ENCODE measurements at regions of chr16 and their contacts with region 1.

Region 1: GRCh38 chr16:3023669-3024478 is at the starts of genes HCFC1R1 and THOC6:
- DNase-seq: peak; percentile 97
- H3K4me3 Mint-ChIP-seq: peak within 1 kb of the TSS; percentile 73
- H3K27ac Mint-ChIP-seq: peak within 1 kb of the TSS; percentile 83
- H3K4me1 Mint-ChIP-seq: peaks cover 58% of the 10 kb centered on the region
- H3K27me3 Mint-ChIP-seq: peaks cover 5% of the 10 kb centered on the region
- total RNA-seq, gene HCFC1R1: 37.0 to 43.3 TPM
- total RNA-seq, gene THOC6: 42.4 TPM

Region 2: DNA sequence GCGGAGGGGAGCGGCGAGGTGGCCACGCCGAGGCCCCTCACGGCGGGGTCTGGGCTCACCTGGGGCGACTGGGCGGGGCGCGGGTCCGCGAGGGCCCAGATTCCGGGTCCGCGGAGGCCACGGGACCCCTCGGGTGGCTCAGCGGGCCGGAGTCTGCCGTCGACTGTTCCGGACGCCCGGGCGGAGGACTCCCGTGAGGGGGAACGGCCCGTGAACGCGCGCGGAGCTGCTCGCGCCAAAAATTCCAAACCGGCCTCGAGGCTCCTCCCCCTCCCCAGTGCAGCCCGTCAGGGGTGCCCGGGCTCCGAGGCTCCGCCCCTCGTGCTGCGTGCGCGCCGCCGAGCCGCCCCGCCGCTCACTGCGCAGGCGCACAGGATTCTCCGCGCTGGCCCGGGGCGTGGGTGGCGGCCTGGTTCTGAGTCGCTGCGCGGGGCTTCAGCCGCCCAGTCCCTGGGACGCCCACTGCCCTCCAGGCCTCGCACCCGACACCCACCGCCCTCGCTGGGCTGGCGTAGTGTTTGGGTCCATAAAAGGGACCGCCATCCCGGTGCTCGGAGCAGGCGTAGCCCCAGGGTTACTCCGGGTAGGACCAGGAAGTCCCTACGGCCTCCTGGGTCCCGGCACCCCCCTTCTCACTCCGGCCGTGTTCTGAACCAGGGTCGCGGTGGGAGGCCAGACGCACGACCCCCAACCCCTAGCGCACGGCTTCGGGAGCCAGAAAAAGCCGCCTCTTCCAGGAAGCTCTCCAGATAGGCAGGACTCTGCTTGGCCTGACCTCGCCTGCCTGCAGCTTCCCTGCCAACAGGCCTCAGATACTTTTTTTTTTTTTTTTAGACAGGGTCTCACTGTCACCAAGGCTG is 43.4 kb before region 1 on chr16 and contains the start of gene PKMYT1:
- CTCF ChIA-PET with region 1: interaction called, 6 read pairs
- POLR2A ChIA-PET with region 1: interaction called, 20 read pairs
- DNase-seq: peak; percentile 95
- H3K4me3 Mint-ChIP-seq: peak within 1 kb of the TSS; percentile 88
- H3K27ac Mint-ChIP-seq: peak within 1 kb of the TSS; percentile 80
- H3K4me1 Mint-ChIP-seq: peaks cover 41% of the 10 kb centered on the region
- H3K27me3 Mint-ChIP-seq: peaks cover 2% of the 10 kb centered on the region
- total RNA-seq, gene PKMYT1: 118 to 124 TPM

Region 3: GRCh38 chr16:3038256-3038655 is 14.4 kb after region 1 on chr16:
- CTCF ChIA-PET with region 1: interaction called, 97 read pairs
- POLR2A ChIA-PET with region 1: interaction called, 58 read pairs
- DNase-seq: no peak
- H3K4me3 Mint-ChIP-seq: no peak overlapping the region
- H3K27ac Mint-ChIP-seq: no peak overlapping the region
- H3K4me1 Mint-ChIP-seq: peaks cover 15% of the 10 kb centered on the region
- H3K27me3 Mint-ChIP-seq: peaks cover 54% of the 10 kb centered on the region

Region 4: DNA sequence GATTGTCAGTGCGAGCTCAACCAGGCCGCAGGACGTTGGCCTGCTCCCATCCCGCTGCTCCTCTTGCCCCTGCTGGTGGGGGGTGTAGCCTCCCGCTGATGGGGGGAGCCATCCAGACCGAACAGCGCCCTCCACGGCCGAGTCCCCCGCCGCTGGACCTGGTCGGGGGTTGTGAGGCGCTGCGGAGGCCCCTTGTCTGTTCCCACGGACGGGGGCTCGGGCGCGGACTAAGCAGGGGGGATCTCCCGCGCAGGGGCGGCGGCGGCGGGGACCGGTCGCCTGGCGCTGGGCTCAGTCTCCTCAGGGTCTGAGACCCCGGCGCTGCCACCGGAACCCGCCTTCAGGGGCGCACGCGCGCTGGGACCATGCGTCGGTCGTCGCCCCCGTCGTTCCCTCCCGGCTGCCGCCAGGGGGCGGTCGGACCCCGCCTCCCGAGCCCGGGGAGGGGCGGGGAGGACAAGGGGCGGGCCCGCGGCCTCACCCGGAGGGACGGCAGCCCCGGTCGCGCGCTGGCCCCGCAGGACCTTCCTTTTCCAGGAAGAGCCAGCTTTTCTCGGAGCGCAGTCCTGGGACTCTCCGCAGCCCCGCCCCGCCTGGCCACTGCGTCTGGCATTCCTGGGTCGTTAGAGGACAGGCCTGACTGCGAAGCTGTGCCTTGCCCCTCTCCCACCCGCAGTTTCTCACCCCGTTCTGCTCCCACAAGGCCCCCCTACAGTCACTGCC is 35.3 kb after region 1 on chr16:
- CTCF ChIA-PET with region 1: interaction called, 21 read pairs
- POLR2A ChIA-PET with region 1: interaction called, 8 read pairs
- DNase-seq: peak; percentile 90
- H3K4me3 Mint-ChIP-seq: peak overlapping the region; percentile 79
- H3K27ac Mint-ChIP-seq: peak overlapping the region; percentile 95
- H3K4me1 Mint-ChIP-seq: peaks cover 74% of the 10 kb centered on the region
- H3K27me3 Mint-ChIP-seq: no peaks in the 10 kb centered on the region

Region 5: DNA sequence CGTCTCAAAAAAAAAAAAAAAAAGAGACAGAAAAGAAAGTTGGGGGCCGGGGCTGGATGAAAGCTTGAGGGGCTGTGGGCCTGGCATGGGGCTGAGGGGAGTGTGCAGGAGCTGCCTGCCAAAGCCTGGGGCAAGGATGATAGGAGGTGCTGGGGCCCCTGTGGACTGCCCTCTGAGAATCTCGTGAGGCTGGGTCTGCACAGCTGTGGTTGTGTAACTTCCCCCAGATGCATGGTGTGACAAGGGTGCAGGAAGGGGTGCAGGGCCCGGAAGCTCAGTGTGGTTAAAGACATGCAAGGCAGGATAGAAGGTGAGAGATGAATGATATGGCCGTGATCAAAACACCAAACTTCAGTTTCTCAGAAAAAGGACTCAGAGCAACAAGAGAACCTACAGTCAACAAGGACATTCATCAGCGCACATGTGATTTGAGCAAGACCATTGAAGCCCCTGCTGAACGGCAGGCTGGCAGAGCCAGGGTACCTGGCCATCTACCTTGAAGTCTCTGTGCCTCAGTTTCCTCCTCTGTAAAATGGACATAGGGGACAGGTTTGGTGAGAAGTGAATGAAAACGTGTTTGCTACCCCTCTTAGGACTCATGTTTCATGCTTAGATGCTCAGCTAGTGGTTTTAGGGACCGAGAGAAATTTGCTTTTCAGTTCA is 51.1 kb after region 1 on chr16:
- CTCF ChIA-PET with region 1: interaction called, 3 read pairs
- POLR2A ChIA-PET with region 1: interaction called, 10 read pairs
- DNase-seq: peak; percentile 94
- H3K4me3 Mint-ChIP-seq: peak overlapping the region; percentile 77
- H3K27ac Mint-ChIP-seq: peak overlapping the region; percentile 100
- H3K4me1 Mint-ChIP-seq: peaks cover 88% of the 10 kb centered on the region
- H3K27me3 Mint-ChIP-seq: no peaks in the 10 kb centered on the region

Region 6: DNA sequence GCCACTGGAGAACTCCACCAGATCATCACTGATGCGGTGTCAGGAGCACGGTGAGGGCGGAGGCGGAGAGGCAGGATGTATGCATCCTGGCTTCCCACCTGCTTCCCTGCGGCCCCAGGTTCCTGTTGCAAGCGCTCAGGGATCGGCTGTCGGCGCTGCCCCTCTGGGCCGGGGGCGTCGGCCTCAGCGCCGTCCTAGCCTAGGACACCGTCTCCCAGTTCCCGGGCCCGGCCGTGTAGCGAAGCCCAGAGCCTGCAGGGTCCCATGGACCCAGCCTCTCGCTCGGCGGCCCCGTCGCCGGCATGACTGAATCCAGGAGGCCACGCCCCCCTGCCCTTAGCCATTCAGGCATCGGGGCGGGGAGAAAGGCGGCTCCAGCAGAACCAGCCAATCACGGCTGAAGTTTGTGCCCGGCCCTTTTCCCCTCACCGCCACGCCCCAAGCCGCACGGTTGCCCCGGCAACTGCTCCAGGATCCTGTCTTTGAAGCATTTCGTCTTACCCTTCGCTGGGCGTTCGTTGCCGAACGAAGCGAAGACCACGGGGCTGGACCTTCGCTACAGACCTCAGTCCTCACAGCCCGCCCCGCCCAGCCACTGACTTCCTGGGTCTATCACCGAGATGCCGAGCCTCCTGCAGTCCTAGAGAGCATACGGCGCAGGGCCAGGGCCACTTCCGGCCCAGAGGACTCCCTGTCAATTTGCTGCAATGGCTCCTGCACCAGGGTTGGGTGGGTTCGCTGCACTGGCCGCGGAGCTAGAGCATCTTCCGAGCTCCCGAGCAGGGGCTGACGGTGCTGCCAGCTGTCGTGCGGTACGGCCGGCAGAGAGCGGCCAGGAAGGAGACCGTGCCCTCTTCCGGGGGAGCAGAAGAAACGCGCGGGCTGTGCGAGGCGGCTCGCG is 100.4 kb after region 1 on chr16:
- CTCF ChIA-PET with region 1: interaction called, 193 read pairs
- POLR2A ChIA-PET with region 1: interaction called, 5 read pairs
- DNase-seq: peak; percentile 98
- H3K4me3 Mint-ChIP-seq: peak overlapping the region; percentile 88
- H3K27ac Mint-ChIP-seq: peak overlapping the region; percentile 98
- H3K4me1 Mint-ChIP-seq: peaks cover 48% of the 10 kb centered on the region
- H3K27me3 Mint-ChIP-seq: no peaks in the 10 kb centered on the region

Region 7: DNA sequence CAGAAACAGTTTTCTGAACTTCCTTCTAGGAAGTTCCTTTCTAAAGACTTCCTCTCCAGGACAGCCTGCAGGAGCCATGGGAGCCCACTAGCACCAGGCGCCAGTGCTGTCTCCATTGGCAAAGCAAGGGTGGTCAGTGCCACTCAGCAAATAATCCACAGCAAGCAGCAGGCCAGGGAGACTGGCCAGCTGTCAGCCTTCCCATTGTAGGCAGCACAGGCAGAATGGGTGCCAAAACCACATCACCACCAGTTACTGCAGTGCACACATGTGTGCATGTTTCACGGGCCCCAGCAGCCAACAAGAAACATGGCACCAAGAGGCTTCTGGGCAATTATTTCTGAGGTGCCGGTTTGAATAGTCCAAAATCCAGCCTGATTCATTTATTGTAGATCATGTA is 657.3 kb after region 1 on chr16:
- CTCF ChIA-PET with region 1: no interaction called
- POLR2A ChIA-PET with region 1: no interaction called
- DNase-seq: no peak
- H3K4me3 Mint-ChIP-seq: no peak overlapping the region
- H3K27ac Mint-ChIP-seq: no peak overlapping the region
- H3K4me1 Mint-ChIP-seq: no peaks in the 10 kb centered on the region
- H3K27me3 Mint-ChIP-seq: no peaks in the 10 kb centered on the region

Measured in activated CD4-positive, alpha-beta memory T cell treated with anti-CD3 and anti-CD28 coated beads, Interleukin-2, amount 10 ng/mL, durations not matched to agents 7 days and 5 days (primary cell).